AG04449 (cell line): ENCODE measurements at regions of chr14 and their contacts with region 1.

Region 1: GRCh38 chr14:74852927-74853514 is 22.9 kb downstream of the PROX2 start:
- DNase-seq: peak; percentile 45
- H3K4me3 ChIP-seq: no peak overlapping the region
- CTCF ChIP-seq: no peak

Region 2: GRCh38 chr14:74824997-74825396 is 28.0 kb before region 1 on chr14:
- CTCF ChIA-PET with region 1: no interaction called
- POLR2A ChIA-PET with region 1: no interaction called
- DNase-seq: peak; percentile 14
- H3K4me3 ChIP-seq: no peak overlapping the region
- CTCF ChIP-seq: no peak

Region 3: DNA sequence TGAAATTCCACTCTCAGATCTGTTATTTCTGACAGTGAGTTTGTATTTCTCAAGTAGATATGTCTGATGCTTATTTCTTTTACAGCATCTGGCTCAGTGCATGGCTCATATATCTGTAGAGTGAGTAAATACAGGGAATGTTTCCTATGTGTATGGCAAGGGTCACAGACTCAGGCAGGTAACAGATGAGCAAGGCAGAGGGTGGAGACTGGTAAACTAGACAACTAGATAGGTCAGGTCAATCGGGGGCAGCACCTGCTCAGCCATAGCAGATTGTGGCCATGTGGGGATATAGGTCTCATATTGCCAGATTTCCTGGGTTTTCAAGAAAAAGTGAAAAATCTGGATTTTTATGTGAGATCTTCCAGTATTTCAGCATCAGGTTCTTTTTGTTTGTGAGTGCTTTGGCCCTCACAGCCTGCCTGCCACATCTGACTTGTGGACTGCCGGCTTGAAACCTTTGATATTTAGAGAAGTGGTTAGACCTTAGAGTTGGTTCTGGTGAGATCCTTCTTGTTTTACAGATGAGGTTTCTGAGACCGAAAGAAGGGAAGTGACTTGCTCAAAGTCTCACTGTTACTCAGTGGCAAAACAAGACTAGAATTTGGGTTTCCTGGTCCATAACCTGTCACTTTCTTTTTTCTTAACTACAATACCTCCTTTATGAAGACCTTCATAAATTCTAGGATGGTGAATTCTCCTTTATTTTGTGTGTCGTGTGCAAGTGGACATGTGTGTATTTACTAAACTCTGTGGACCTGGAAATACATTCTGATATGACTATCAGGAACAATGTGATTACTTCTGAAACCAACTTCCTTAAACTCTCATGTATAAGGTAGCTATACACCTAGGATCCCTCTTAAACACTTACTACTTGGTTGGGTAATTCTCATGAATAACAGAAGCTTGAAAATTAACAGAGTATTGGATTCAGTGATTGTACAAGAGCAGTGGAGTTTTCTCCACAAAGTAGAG is 11.5 kb before region 1 on chr14:
- CTCF ChIA-PET with region 1: interaction called, 70 read pairs
- POLR2A ChIA-PET with region 1: no interaction called
- DNase-seq: no peak
- H3K4me3 ChIP-seq: no peak overlapping the region
- CTCF ChIP-seq: no peak